GM12878 (cell line): ENCODE measurements at regions of chr10 and their contacts with region 1.

Region 1: DNA sequence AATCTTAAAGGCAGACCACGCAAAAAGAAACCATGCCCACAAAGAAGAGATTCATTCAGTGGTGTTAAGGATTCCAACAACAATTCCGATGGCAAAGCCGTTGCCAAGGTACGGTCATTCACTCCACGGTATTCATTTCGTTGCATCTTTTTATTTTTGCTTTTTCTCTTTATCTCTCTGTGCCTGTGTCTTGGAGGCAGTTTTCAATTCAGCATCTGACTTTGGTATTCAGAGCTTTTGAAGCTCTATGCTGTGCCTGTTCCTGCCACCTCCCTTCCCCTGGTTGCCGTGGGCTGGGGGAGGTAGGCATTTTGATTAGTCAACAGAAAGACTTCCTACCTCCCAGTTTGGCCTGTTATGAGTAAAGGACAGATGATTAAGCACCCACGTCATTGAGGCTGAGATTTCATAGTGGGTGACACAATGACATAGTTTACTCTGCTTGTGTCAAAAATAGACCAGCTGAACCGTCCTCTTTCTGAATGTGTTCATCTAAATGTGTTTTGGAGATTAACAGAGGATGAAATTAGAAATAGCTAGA is 149.5 kb downstream of the ARID5B start:
- DNase-seq: peak; percentile 67
- ATAC-seq: peak; percentile 57
- H3K4me3 ChIP-seq: peak overlapping the region; percentile 68
- H3K27ac ChIP-seq: peak overlapping the region; percentile 93
- H3K4me1 ChIP-seq: peaks cover 59% of the 10 kb centered on the region
- H3K27me3 ChIP-seq: no peaks in the 10 kb centered on the region
- CTCF ChIP-seq: no peak
- EP300 ChIP-seq: peak; percentile 91; a peak in 3 of 4 replicates
- POLR2A ChIP-seq: peak; percentile 45; the same call in 1 of the 2 replicates
- RAD21 ChIP-seq: no peak

Region 2: GRCh38 chr10:61943674-61944410 is 107.1 kb before region 1 on chr10:
- CTCF ChIA-PET with region 1: no interaction called
- POLR2A ChIA-PET with region 1: no interaction called
- RAD21 ChIA-PET with region 1: interaction called, 3 read pairs
- SMC1A ChIA-PET with region 1: no interaction called
- in situ Hi-C with region 1: no loop called
- intact Hi-C with region 1: loop called (anchors 5 kb)
- DNase-seq: no peak
- ATAC-seq: peak; percentile 73
- H3K4me3 ChIP-seq: 0 out of 2 replicates have a peak overlapping the region, but pooled peaks have one; percentile 53
- H3K27ac ChIP-seq: peak overlapping the region; percentile 97
- H3K4me1 ChIP-seq: peaks cover 52% of the 10 kb centered on the region
- H3K27me3 ChIP-seq: no peaks in the 10 kb centered on the region
- CTCF ChIP-seq: peak in 1 of 3 experiments; percentile 11; a peak in 1 of 6 replicates
- EP300 ChIP-seq: peak in 1 of 2 experiments; percentile 63; a peak in 1 of 4 replicates
- POLR2A ChIP-seq: no peak
- RAD21 ChIP-seq: peak; percentile 42; the same call in 1 of the 2 replicates

Region 3: GRCh38 chr10:62038609-62039190 is 12.3 kb before region 1 on chr10:
- CTCF ChIA-PET with region 1: interaction called, 24 read pairs
- POLR2A ChIA-PET with region 1: no interaction called
- RAD21 ChIA-PET with region 1: interaction called, 17 read pairs
- SMC1A ChIA-PET with region 1: interaction called, 32 read pairs
- in situ Hi-C with region 1: no loop called
- intact Hi-C with region 1: no loop called
- DNase-seq: no peak
- ATAC-seq: peak; percentile 83
- H3K4me3 ChIP-seq: no peak overlapping the region
- H3K27ac ChIP-seq: peak overlapping the region; percentile 16
- H3K4me1 ChIP-seq: peaks cover 44% of the 10 kb centered on the region
- H3K27me3 ChIP-seq: no peaks in the 10 kb centered on the region
- CTCF ChIP-seq: peak; percentile 70 to 86 (median 81)
- EP300 ChIP-seq: no peak
- POLR2A ChIP-seq: no peak
- RAD21 ChIP-seq: peak; percentile 96

Region 4: GRCh38 chr10:62109587-62110293 is 58.8 kb after region 1 on chr10:
- CTCF ChIA-PET with region 1: interaction called, 4 read pairs
- POLR2A ChIA-PET with region 1: interaction called, 9 read pairs
- RAD21 ChIA-PET with region 1: no interaction called
- SMC1A ChIA-PET with region 1: interaction called, 8 read pairs
- in situ Hi-C with region 1: no loop called
- intact Hi-C with region 1: loop called (anchors 2 kb)
- DNase-seq: peak; percentile 51
- ATAC-seq: peak; percentile 88
- H3K4me3 ChIP-seq: no peak overlapping the region
- H3K27ac ChIP-seq: peak overlapping the region; percentile 69
- H3K4me1 ChIP-seq: peaks cover 36% of the 10 kb centered on the region
- H3K27me3 ChIP-seq: no peaks in the 10 kb centered on the region
- CTCF ChIP-seq: no peak
- EP300 ChIP-seq: peak; percentile 55 to 87
- POLR2A ChIP-seq: no peak
- RAD21 ChIP-seq: no peak

Region 5: GRCh38 chr10:62268399-62269114 is 217.6 kb after region 1 on chr10 and contains the start of gene RTKN2:
- CTCF ChIA-PET with region 1: no interaction called
- POLR2A ChIA-PET with region 1: no interaction called
- RAD21 ChIA-PET with region 1: no interaction called
- SMC1A ChIA-PET with region 1: no interaction called
- in situ Hi-C with region 1: no loop called
- intact Hi-C with region 1: no loop called
- DNase-seq: no peak
- ATAC-seq: peak; percentile 85
- H3K4me3 ChIP-seq: peak within 1 kb of the TSS; percentile 74
- H3K27ac ChIP-seq: no peak within 1 kb of the TSS
- H3K4me1 ChIP-seq: no peaks in the 10 kb centered on the region
- H3K27me3 ChIP-seq: peaks cover 10 to 13% of the 10 kb centered on the region in 2 experiments
- CTCF ChIP-seq: no peak
- EP300 ChIP-seq: no peak
- POLR2A ChIP-seq: no peak; the same call in 1 of the 2 replicates
- RAD21 ChIP-seq: no peak
- polyA plus RNA-seq, gene RTKN2: not detected